ENCODE measurements at regions of chr19 and their contacts with region 1.

Region 1: GRCh38 chr19:44974857-44975256 is 19.7 kb downstream of the CLPTM1 start:
- DNase-seq: no peak
- H3K4me3 ChIP-seq: no peak overlapping the region
- H3K27ac ChIP-seq: no peak overlapping the region
- H3K4me1 ChIP-seq: no peaks in the 10 kb centered on the region
- H3K27me3 ChIP-seq: no peaks in the 10 kb centered on the region
- CTCF ChIP-seq: no peak

Region 2: DNA sequence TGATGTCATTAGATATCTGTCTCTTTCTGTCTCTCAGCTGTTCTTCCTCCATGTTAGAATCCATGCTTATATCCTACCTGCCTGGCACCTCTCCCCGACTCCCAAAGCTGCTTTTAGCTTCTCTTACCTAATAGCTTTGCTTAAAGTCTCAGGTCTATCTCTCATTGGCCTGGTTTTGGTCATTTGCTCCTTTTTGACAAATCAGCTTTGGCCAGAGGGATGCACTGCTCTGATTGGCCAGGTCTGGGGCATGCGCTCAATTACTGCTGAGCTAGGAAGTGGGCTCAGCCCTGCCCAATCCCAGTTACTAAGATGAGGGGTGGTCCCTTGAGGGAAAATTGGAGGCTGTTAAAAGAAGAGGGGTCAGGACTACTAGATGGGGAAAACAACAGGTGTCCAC is 52.5 kb after region 1 on chr19:
- CTCF ChIA-PET with region 1: no interaction called
- dilution Hi-C with region 1: loop called (anchors 5 kb)
- in situ Hi-C with region 1: no loop called
- intact Hi-C with region 1: no loop called
- DNase-seq: no peak
- H3K4me3 ChIP-seq: no peak overlapping the region
- H3K27ac ChIP-seq: no peak overlapping the region
- H3K4me1 ChIP-seq: no peaks in the 10 kb centered on the region
- H3K27me3 ChIP-seq: no peaks in the 10 kb centered on the region
- CTCF ChIP-seq: no peak

Measured in mammary epithelial cell (primary cell).